Tibial artery (tissue), 4 donors: ENCODE measurements at regions of chr2 and their contacts with region 1.

Region 1: GRCh38 chr2:219530048-219530963 is 13.3 kb downstream of the CHPF start:
- DNase-seq: peak; percentile 74 to 89
- H3K4me3 ChIP-seq: peak overlapping the region; percentile 21
- H3K27ac ChIP-seq: no peak overlapping the region
- H3K4me1 ChIP-seq: peaks cover 0 to 8% (median 2%) of the 10 kb centered on the region in 4 donors
- H3K27me3 ChIP-seq: peaks cover 0 to 22% of the 10 kb centered on the region in 2 donors
- CTCF ChIP-seq: peak; percentile 99

Region 2: DNA sequence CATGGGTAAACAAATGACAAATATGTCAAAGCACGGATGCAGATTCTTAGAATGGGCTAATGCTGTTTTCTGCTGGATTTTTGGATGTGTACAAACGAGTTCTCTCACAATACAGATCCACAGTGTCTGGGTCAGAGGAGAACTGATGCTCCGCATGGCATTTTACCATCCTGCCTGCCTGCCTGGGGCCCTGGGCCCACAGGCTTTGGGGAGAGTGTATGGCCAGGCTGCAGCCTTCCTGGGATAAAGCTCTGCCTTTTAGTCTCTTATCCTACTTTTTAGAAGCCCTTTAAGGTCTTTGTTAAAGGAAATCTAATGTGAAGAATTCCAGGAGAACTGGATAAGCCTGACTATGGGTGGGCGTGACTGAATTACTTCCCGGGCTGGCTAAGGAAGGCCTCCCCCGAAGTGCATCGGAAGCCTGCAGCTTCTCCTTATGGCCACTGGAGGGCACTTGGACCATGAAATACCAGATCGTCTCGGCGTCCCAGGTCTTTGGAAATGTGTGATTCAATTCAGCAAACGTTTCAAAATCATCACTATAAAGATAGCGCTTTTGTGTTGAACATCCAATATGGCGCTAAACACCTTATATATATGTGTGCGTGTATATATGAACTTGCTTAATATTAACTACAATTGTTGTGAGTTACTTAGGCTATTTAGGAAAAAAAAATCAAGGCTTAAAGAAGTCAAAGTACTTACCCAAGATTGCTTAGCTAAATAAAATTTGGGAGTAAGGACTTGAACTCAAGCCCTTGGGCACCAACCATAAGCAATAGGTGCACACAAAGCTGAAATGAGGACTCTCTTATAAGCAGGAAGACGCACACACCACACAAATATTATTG is 127.4 kb before region 1 on chr2:
- intact Hi-C with region 1: loop called (anchors 1 kb)
- DNase-seq: peak; percentile 74 to 79
- H3K4me3 ChIP-seq: no peak overlapping the region
- H3K27ac ChIP-seq: peak overlapping the region; percentile 90 to 94
- H3K4me1 ChIP-seq: peaks cover 5 to 53% (median 44%) of the 10 kb centered on the region in 4 donors
- H3K27me3 ChIP-seq: no peaks in the 10 kb centered on the region
- CTCF ChIP-seq: peak; percentile 93 to 94

Region 3: GRCh38 chr2:219475697-219476651 is 54.3 kb before region 1 on chr2:
- intact Hi-C with region 1: loop called (anchors 2 kb)
- DNase-seq: peak; percentile 57 to 87
- H3K4me3 ChIP-seq: no peak overlapping the region
- H3K27ac ChIP-seq: peak overlapping the region; percentile 76 to 96
- H3K4me1 ChIP-seq: peaks cover 0 to 38% (median 8%) of the 10 kb centered on the region in 4 donors
- H3K27me3 ChIP-seq: no peaks in the 10 kb centered on the region
- CTCF ChIP-seq: peak; percentile 88 to 94